AG04449 (cell line): ENCODE measurements at regions of chr7 and their contacts with region 1.

Region 1: DNA sequence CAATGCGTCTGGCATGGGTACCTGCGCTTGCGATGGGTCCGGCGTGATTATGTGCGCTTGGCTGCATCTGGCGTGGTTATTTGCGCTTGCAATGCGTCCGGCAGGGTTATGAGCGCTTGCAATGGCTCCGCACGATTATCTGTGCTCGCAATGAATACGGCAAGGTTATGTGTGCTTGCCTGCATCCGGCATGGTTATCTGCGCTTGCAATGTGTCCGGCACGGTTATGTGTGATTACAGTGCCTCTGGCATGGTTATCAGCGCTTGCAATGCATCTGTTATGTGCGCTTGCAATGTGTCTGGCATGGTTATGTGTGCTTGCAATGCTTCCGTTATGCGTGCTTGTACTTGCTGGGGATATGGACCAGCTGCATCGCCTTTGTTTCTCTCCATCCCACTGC is 37.7 kb downstream of the RBAK start:
- DNase-seq: no peak
- H3K4me3 ChIP-seq: no peak overlapping the region
- CTCF ChIP-seq: no peak

Region 2: DNA sequence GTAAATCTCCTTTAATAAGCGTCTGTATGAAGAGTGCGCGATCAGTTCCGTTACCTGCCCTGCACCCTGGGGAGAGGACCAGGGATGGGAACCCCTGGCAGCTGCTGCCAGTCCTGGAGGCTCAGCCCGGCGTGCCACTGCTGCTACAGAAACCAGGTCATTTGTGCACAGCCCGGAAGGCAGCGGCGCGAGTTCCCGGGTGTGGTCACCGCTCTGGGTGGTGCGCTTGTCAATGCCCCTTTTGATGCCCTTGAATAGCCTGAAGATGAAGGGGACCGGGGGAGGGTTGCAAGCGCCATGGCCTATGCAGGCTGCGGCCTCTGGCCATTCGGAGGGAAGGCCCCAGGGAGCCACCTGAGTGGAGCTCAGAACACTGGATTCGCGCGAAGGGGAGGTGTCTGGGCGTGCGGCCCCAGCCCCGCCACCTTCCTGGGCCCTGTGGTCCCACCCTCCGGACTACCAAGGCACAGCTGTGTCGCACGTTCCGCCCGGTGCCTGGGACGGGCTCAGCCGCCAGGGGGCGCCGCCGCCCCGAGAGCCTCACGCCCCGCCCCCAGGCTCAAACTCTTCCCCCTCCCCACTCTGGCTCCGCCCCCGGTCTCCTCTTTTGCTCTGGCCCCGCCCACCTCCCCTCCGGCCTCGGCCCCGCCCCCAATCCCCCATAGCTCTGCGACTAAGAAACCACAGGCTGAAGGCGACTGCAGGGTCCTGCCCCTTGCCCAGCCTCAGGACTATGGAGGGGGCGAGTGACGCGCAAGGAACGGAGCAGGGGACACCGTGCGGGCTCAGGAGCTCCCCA is 291.4 kb before region 1 on chr7:
- CTCF ChIA-PET with region 1: interaction called, 81 read pairs
- POLR2A ChIA-PET with region 1: no interaction called
- DNase-seq: no peak
- H3K4me3 ChIP-seq: peak overlapping the region; percentile 33
- CTCF ChIP-seq: peak; percentile 80

Region 3: DNA sequence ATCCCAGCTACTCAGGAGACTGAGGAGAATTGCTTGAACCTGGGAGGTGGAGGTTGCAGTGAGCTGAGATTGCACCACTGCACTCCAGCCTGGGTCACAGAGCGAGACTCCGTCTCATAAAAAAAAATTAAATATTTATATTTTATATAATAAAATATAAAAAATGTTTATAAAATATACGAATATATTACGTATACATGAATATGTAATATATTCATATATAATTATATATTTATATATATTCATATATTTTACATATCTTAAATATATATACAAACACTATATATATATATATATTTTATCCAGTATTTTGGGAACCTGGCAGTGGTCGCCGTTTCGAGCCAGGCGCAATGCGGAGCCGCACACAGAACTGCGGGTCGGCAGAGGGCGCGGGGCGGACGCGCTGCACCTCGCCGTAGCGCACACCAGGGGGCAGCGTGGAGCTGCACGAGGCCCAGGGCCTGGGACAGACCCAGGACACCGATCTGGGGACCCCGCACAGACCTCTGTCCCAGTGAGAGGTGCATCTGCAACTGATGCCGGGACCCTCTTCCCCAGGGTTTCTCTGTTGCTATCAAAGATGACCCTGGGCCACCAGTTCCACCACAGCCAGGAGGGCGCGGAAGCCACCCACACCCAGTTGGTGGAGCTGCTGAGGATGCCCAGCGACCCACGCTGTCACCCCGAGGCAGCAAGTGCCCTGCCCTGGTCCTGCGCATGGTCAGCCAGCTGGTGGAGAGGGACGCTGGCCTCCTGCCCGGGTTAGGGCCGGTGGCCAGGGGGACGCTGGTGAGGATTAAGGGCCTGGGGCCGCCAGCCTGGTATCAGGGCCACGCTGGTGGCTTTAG is 285.2 kb before region 1 on chr7:
- CTCF ChIA-PET with region 1: interaction called, 81 read pairs
- POLR2A ChIA-PET with region 1: no interaction called
- DNase-seq: no peak
- H3K4me3 ChIP-seq: no peak overlapping the region
- CTCF ChIP-seq: peak; percentile 99

Region 4: GRCh38 chr7:4830176-4830575 is 253.1 kb before region 1 on chr7:
- CTCF ChIA-PET with region 1: interaction called, 24 read pairs
- POLR2A ChIA-PET with region 1: interaction called, 4 read pairs
- DNase-seq: no peak
- H3K4me3 ChIP-seq: no peak overlapping the region
- CTCF ChIP-seq: peak; percentile 87